HepG2 (cell line): ENCODE measurements at regions of chr1 and their contacts with region 1.

Region 1: GRCh38 chr1:169148472-169149252 is 42.2 kb downstream of the ATP1B1 start:
- DNase-seq: peak; percentile 97
- ATAC-seq: peak; percentile 87
- H3K4me3 ChIP-seq: peak overlapping the region in 1 of 3 experiments; percentile 1; a peak in 1 of 6 replicates
- H3K27ac ChIP-seq: peak overlapping the region; percentile 95
- H3K4me1 ChIP-seq: peaks cover 77% of the 10 kb centered on the region
- H3K27me3 ChIP-seq: no peaks in the 10 kb centered on the region
- CTCF ChIP-seq: no peak
- EP300 ChIP-seq: peak; percentile 87 to 97
- POLR2A ChIP-seq: peak in 1 of 2 experiments; percentile 28; a peak in 2 of 4 replicates
- RAD21 ChIP-seq: no peak

Region 2: DNA sequence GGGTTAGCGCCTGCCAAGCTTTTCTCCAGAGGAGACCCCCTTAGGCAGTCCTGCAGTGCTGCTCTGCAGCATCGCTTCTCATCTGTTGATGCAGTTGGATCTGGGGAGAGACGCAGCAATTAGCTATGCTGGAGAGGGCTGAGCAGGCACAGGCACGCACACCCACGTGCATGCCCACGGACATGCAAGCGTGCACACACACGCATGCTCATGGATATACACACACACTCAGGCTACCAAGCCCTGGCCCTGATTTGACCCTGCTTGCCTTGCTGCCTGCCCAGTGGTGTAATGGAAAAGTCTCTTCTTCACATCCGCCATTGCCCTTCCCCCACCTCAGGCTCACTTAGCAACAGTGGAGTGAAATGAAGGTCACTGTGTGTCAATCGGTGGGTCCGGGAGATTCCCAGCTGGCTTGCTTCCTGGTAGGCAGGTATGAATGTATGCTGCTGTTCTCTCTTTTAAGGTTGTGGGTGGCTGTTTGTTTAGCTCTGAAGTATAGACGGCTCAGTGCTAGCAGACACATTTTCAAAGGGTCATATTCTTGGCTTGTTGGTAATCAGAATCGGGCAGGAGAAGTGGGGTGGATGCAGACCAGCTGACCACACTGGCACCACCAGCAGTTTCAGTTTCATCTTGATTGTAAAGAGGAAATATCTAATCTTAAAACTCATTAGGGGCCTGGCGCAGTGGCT is 32.6 kb before region 1 on chr1:
- CTCF ChIA-PET with region 1: no interaction called
- POLR2A ChIA-PET with region 1: interaction called, 25 read pairs
- in situ Hi-C with region 1: no loop called
- intact Hi-C with region 1: no loop called
- DNase-seq: peak; percentile 96
- ATAC-seq: peak; percentile 80
- H3K4me3 ChIP-seq: peak overlapping the region in 1 of 3 experiments; percentile 25; a peak in 2 of 6 replicates
- H3K27ac ChIP-seq: peak overlapping the region; percentile 66
- H3K4me1 ChIP-seq: peaks cover 98% of the 10 kb centered on the region
- H3K27me3 ChIP-seq: no peaks in the 10 kb centered on the region
- CTCF ChIP-seq: no peak
- EP300 ChIP-seq: peak; percentile 62 to 81; a peak in 3 of 4 replicates
- POLR2A ChIP-seq: peak; percentile 35 to 57; a peak in 3 of 4 replicates
- RAD21 ChIP-seq: no peak

Region 3: DNA sequence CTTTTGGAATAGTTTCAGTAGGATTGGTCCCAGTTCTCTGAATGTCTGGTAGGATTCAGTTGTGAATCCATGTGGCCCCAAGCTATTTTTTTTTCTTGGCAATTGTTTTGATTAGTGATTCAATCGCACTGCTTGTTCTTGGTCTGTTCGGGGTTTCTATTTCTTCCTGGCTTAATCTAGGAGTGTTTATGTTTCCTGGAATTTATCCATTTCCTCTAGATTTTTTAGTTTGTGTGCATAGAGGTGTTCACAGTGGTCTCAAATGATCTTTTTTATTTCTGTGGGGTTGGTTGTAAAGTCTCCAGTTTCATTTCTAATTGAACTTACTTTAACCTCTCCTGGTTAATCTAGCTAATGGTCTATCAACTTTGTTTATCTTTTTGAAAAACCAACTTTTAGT is 101.4 kb after region 1 on chr1:
- CTCF ChIA-PET with region 1: no interaction called
- POLR2A ChIA-PET with region 1: no interaction called
- in situ Hi-C with region 1: no loop called
- intact Hi-C with region 1: loop called (anchors 5 kb)
- DNase-seq: no peak
- ATAC-seq: no peak
- H3K4me3 ChIP-seq: no peak overlapping the region
- H3K27ac ChIP-seq: peak overlapping the region; percentile 4
- H3K4me1 ChIP-seq: peaks cover 19% of the 10 kb centered on the region
- H3K27me3 ChIP-seq: no peaks in the 10 kb centered on the region
- CTCF ChIP-seq: no peak
- EP300 ChIP-seq: no peak
- POLR2A ChIP-seq: no peak
- RAD21 ChIP-seq: no peak